ENCODE measurements at regions of chr1 and their contacts with region 1.

Region 1: GRCh38 chr1:9874959-9875635 is 35.0 kb downstream of the CTNNBIP1 start:
- DNase-seq: no peak
- H3K4me3 ChIP-seq: peak overlapping the region; percentile 30 to 47 (median 39)
- H3K27ac ChIP-seq: peak overlapping the region; percentile 67 to 73 (median 72)
- H3K4me1 ChIP-seq: peaks cover 19 to 24% (median 21%) of the 10 kb centered on the region in 4 donors
- H3K27me3 ChIP-seq: no peaks in the 10 kb centered on the region
- CTCF ChIP-seq: peak; percentile 93 to 97 (median 94)
- EP300 ChIP-seq: no peak
- POLR2A ChIP-seq: no peak

Region 2: DNA sequence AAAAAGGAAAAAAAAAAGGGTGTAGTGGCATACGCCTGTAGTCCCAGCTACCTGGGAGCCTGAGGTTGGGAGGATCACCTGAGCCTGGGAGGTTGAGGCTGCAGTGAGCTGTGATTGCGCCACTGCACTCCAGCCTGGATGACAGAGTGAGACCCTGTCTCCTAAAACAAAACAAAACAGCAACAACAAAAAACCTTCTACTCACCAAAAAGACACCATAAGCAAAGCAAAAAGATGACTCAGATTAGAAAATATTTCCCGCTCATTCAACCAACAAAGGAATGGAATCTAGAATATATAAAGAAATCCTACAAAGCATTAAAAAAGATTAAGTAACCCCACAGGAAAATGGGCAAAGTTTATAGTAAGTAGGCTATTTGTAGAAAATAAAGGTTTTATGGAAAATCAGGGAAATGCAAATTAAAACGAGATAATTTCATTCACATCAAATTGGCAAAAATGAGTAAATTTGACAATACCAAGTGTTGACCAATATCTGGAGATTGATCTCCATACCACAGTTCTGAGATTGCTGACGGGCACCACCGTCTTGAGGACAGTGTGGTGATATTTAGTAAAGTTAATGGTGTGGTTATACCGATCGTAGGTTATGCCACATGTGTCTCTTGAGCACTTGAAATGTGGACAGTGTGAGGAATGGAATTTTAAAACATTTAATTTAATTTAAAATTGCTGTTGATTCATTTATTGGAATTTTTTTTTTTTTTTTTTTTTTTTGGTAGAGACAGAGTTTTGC is 169.6 kb before region 1 on chr1:
- intact Hi-C with region 1: no loop called
- DNase-seq: no peak
- H3K4me3 ChIP-seq: no peak overlapping the region
- H3K27ac ChIP-seq: no peak overlapping the region
- H3K4me1 ChIP-seq: no peaks in the 10 kb centered on the region
- H3K27me3 ChIP-seq: no peaks in the 10 kb centered on the region
- CTCF ChIP-seq: no peak
- EP300 ChIP-seq: no peak
- POLR2A ChIP-seq: no peak

Region 3: DNA sequence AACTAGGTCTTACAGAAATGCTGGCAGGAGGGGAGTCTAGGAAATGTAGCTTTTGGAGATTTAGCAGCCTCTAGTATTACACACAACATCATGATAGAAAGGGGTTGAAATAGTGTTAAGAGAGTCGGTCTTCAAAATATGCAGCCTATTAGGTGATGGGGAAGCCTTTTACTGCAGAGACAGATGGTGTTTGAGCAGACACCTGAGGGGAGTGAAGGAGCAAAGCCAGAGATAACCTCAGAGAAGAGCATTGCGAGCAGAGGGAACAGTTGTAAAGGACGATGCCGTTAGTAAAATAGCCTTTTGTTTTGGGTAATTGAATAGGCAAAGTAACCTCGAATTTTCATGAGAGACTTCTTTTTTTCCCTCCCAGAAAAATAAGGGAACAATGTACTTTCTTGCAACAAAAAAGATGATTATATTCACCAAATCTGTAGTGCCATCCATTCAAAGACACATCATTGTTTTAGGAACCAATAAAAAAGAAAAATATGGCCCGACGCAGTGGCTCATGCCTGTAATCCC is 268.9 kb after region 1 on chr1:
- intact Hi-C with region 1: loop called (anchors 10 kb)
- DNase-seq: no peak
- H3K4me3 ChIP-seq: no peak overlapping the region
- H3K27ac ChIP-seq: no peak overlapping the region
- H3K4me1 ChIP-seq: peaks cover 5 to 7% (median 6%) of the 10 kb centered on the region in 4 donors
- H3K27me3 ChIP-seq: no peaks in the 10 kb centered on the region
- CTCF ChIP-seq: no peak
- EP300 ChIP-seq: no peak
- POLR2A ChIP-seq: no peak

Measured in esophagus muscularis mucosa (tissue), 4 donors.